Aorta (tissue), 5 donors: ENCODE measurements at regions of chr2 and their contacts with region 1.

Region 1: GRCh38 chr2:231056453-231057424 is at the start of gene PSMD1:
- DNase-seq: peak; percentile 95 to 97
- ATAC-seq: peak; percentile 97
- H3K4me3 ChIP-seq: peak within 1 kb of the TSS; percentile 74 to 97
- H3K27ac ChIP-seq: peak within 1 kb of the TSS in 1 of 2 donors; percentile 86
- H3K4me1 ChIP-seq: peaks cover 0 to 18% of the 10 kb centered on the region in 2 donors
- H3K27me3 ChIP-seq: no peaks in the 10 kb centered on the region
- total RNA-seq, gene PSMD1: 67.7 to 69.7 TPM

Region 2: DNA sequence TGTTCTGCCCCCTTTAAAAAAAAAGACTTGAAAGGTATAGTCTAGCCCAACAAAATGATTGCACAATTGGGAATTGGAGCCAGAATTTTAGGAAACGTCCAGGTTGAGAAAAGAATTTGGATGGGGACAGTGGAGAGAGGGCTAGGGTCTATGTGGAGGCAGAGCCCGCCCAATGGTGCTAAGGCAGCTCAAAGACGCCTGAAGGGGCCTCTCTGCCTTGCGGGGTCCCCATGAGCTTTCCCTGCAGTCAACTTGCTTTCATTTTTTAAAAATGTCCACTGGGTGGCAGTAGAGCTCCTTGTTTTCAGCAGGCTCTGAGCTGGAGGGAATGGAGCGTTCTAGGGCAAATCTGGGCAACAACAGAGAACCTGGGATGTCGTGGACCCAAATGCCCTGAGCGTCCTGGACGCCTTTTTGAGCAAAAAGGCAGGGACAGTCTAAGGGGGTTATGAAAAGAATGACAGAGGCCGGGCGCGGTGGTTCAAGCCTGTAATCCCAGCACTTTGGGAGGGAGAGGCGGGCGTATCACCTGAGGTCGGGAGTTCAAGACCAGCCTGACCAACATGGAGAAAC is 232.2 kb before region 1 on chr2:
- intact Hi-C with region 1: loop called (anchors 10 kb)
- DNase-seq: no peak
- ATAC-seq: peak; percentile 84
- H3K4me3 ChIP-seq: no peak overlapping the region
- H3K27ac ChIP-seq: no peak overlapping the region
- H3K4me1 ChIP-seq: no peaks in the 10 kb centered on the region
- H3K27me3 ChIP-seq: no peaks in the 10 kb centered on the region

Region 3: DNA sequence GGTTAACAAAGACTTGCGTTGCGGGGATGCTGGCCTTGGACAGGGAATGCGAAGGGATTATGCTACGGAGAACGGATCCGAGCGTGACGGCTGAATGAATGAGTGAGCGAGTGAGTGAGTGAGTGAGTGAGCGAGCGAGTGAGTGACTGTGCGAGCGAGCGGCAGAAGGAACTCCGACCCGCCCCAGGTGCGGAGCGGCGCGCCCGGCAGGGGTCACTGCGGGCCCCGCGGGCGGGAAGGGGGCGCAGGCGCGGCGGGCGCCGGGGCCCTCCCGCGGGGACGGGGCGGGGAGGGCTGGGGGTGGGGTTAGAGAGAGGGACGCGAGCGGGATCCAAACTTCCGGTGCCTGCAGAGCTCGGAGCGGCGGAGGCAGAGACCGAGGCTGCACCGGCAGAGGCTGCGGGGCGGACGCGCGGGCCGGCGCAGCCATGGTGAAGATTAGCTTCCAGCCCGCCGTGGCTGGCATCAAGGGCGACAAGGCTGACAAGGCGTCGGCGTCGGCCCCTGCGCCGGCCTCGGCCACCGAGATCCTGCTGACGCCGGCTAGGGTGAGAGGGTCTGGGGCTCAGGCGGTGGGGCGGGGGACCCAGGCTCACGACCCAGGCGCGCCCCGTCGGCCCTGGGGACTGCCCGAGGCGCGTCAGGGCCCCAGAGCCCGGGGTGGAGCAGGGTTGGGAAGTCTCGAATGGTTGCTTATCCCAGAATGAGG is 192.0 kb before region 1 on chr2 and contains the start of gene ITM2C:
- intact Hi-C with region 1: no loop called
- DNase-seq: peak; percentile 72 to 88
- ATAC-seq: peak; percentile 71
- H3K4me3 ChIP-seq: peak within 1 kb of the TSS; percentile 7 to 78
- H3K27ac ChIP-seq: no peak within 1 kb of the TSS
- H3K4me1 ChIP-seq: no peaks in the 10 kb centered on the region
- H3K27me3 ChIP-seq: no peaks in the 10 kb centered on the region
- total RNA-seq, gene ITM2C: 59.6 to 99.5 TPM